Activated CD4-positive, alpha-beta T cell treated with anti-CD3 and anti-CD28 coated beads for 36 hours (primary cell): ENCODE measurements at regions of chr22 and their contacts with region 1.

Region 1: DNA sequence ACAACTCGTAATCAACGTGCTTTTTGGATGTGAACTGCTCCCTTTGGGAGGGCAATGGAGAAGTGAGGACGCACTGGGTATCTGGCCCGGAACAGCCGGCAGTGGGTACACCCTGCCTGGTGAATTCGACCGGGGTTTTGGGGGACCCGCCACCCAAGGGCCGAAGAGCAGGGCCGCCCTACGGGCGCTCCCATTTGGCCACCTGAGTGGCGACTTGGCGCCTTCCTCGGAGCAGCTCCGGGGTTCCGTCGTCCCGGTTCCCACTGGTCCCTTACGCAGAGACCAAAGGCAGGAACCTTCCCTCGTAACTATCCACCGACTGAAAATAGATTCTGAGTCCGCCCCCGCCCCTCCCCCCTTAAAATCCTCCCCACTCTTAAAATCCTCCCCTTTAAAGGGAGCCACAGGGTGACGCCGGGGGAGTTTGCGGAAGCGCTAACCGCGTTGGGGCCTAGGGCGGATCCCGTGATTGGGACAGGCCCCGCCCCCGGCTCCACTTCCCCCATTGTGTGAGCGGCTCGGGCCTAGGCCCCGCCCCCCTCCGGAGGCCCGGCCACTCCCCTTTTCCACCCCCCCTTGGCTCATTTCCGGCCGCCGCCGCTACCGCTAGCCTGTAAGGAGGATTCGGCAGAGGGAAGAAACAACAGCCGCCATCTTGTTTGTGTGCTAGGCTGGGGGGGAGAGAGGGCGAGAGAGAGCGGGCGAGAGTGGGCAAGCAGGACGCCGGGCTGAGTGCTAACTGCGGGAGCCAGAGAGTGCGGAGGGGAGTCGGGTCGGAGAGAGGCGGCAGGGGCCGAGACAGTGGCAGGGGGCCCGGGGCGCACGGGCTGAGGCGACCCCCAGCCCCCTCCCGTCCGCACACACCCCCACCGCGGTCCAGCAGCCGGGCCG is 1.0 kb upstream of the EP300 start:
- DNase-seq: peak; percentile 100
- ATAC-seq: peak; percentile 90
- H3K4me3 Mint-ChIP-seq: peak overlapping the region; percentile 97
- H3K27ac Mint-ChIP-seq: peak overlapping the region; percentile 99
- H3K4me1 Mint-ChIP-seq: peaks cover 25% of the 10 kb centered on the region
- H3K27me3 Mint-ChIP-seq: no peaks in the 10 kb centered on the region

Region 2: DNA sequence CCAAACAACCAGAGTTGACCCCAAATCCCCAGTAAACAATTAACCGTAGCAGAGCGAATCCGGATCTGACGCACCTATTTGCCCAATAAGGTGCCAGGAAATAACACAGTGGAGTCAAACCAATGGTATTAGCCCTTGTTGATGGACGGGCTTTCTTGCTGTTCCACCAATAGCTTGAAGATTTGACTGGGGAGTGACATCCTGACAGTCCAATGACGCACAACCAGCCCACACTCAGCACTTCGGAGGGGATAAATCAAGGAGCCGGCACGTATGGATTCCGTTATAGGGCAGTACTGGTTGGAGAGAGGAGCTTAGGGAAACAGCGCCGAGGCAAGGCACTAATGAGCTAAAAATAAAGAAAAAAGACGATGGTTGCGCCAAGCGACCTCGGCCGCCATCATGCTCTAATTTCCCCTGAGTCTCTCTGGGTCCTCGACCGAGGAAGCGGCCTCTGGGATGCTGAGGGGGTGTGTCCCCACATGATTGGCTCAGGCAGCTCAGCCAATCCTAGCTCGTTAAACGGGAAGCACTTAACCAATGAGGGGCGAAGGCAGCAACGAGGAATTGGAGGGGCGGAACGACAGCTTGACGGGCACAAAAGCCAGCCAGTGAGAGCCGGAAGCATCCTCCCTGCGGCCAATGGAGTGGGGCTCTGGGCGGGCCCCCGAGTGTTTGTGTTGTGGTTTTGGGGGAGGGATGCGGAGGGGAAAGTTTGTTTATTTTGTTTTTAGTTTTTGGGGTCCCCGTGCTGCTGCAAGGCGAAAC is 1047.1 kb before region 1 on chr22:
- CTCF ChIA-PET with region 1: no interaction called
- POLR2A ChIA-PET with region 1: no interaction called
- intact Hi-C with region 1: loop called in 1 of 2 experiments (anchors 5 kb)
- DNase-seq: peak; percentile 98
- ATAC-seq: peak; percentile 91
- H3K4me3 Mint-ChIP-seq: peak overlapping the region; percentile 87
- H3K27ac Mint-ChIP-seq: peak overlapping the region; percentile 99
- H3K4me1 Mint-ChIP-seq: peaks cover 24% of the 10 kb centered on the region
- H3K27me3 Mint-ChIP-seq: peaks cover 2% of the 10 kb centered on the region

Region 3: DNA sequence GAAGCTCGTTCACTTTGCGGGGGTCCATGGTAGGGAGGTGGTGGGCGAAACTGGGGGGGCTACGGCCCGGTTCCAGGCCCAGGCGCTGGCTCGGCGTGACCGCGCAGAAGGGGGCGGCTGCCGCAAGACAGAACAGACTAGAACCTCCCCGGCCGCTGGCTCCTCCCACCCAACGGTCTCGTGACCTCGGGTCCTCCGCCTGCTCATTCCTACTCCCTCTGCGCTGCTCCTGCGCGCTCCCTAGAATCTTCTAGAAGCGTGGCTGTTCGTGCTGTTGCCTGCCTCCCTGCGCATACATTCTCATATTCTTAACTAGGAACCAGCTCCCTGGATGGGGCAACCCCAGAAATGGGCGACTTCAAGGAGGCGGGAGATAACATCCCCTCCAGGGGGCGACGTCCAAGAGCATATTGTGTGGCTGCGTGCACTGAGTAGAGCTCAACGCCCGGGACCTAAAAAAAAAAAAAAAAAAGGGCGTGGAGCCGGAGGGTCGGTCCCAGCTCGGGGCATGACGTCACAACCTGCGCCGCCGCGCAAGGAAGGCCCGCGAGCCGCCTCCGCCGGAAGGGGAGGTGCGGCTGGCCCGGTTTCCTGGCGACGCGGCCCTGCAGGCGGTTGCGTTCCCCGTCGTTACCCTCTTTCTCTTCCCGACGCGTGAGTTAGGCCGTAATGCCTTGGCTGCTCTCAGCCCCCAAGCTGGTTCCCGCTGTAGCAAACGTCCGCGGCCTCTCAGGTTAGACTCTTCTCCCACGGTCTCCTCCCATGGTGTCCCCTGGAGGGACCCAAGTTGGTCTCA is 234.7 kb before region 1 on chr22 and contains the starts of genes ST13 and XPNPEP3:
- CTCF ChIA-PET with region 1: no interaction called
- POLR2A ChIA-PET with region 1: no interaction called
- intact Hi-C with region 1: loop called (anchors 1 to 5 kb)
- DNase-seq: peak; percentile 98
- ATAC-seq: peak; percentile 96
- H3K4me3 Mint-ChIP-seq: peak within 1 kb of the TSS; percentile 97
- H3K27ac Mint-ChIP-seq: peak within 1 kb of the TSS; percentile 99
- H3K4me1 Mint-ChIP-seq: peaks cover 53% of the 10 kb centered on the region
- H3K27me3 Mint-ChIP-seq: no peaks in the 10 kb centered on the region
- total RNA-seq, gene ST13: 260 to 297 TPM
- total RNA-seq, gene XPNPEP3: 21.5 to 25.8 TPM

Region 4: GRCh38 chr22:41106122-41106968 is 15.0 kb after region 1 on chr22:
- CTCF ChIA-PET with region 1: interaction called, 5 read pairs
- POLR2A ChIA-PET with region 1: interaction called, 6 read pairs
- intact Hi-C with region 1: loop called in 1 of 2 experiments (anchors 1 kb)
- DNase-seq: peak; percentile 17
- ATAC-seq: peak; percentile 63
- H3K4me3 Mint-ChIP-seq: peak overlapping the region; percentile 1
- H3K27ac Mint-ChIP-seq: peak overlapping the region; percentile 84
- H3K4me1 Mint-ChIP-seq: peaks cover 59% of the 10 kb centered on the region
- H3K27me3 Mint-ChIP-seq: no peaks in the 10 kb centered on the region

Region 5: DNA sequence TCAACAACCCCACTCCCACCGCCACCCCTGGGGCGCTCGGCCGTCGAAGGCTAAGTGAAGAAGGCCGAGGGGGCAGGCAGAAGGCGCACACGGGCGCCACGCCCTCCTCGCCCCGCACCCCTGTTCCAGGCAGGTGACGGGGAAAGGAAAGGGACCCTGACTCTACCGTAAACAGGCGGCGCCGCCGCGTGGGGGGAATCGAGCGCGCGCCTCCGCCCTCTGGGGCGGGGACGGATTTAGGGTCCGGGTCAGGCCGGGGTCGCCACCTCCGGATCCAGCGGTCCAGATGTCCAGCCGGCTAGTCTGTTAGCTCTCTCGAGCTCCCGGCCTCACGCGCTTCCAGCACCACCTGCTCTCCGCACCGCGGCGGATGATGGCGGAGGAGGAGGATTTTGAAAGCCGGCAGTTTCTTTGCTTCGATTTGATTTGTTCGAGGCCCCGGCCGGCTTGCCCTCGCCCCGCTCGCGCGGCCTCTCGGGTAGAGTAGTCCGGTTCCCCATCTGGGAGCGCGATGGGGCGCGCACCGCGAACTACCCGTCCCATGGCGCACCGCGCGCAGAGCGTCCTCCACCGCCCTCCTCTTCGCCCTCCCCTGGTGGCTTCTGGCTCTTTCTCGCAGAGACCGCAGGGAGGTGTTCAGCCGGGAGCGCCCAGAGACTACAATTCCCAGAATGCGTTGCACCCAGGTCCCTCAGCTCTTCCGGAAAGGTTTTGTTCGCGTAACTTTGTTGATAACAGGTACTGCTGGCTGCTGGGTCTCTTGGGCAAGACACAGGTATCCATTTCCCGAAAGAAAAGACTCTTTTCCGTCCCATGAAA is 194.7 kb after region 1 on chr22 and contains the start of gene RANGAP1:
- CTCF ChIA-PET with region 1: interaction called, 3 read pairs
- POLR2A ChIA-PET with region 1: interaction called, 3 read pairs
- intact Hi-C with region 1: loop called (anchors 1 kb)
- DNase-seq: peak; percentile 99
- ATAC-seq: peak; percentile 94
- H3K4me3 Mint-ChIP-seq: peak within 1 kb of the TSS; percentile 88
- H3K27ac Mint-ChIP-seq: peak within 1 kb of the TSS; percentile 97
- H3K4me1 Mint-ChIP-seq: peaks cover 33% of the 10 kb centered on the region
- H3K27me3 Mint-ChIP-seq: no peaks in the 10 kb centered on the region
- total RNA-seq, gene RANGAP1: 140 to 157 TPM

Region 6: DNA sequence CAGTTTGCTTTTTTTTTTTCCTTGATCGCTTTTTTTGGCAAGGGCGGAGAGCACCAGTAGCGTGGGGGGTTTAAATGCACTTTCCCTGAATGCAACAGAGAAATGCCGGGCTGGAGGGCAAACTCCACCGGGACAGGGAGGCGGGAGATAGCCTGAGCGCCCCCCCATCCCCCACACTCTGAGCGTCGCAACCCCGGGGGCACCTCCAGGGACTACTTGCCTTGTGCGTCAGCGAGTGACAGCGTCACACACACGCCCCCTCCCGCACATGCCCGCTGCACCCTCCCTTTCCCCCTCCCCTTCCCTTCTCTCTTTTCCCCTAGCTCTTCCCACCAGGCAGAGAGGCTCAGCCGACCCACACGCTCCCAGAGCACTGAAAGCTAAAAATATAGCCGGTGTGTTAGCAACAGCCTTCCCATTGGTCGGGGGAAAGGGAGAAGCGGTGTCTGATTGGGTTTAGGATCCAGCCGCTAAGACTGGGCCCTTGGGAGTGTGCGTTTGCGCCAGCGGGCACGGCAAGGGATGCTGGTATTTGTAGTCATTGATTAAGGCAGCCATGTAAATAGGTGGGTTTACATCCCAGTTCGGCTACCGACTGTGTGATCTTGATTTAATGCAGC is 356.9 kb after region 1 on chr22:
- CTCF ChIA-PET with region 1: no interaction called
- POLR2A ChIA-PET with region 1: interaction called, 3 read pairs
- intact Hi-C with region 1: loop called in 1 of 2 experiments (anchors 2 kb)
- DNase-seq: peak; percentile 95
- ATAC-seq: peak; percentile 73
- H3K4me3 Mint-ChIP-seq: peak overlapping the region; percentile 86
- H3K27ac Mint-ChIP-seq: peak overlapping the region; percentile 97
- H3K4me1 Mint-ChIP-seq: peaks cover 8% of the 10 kb centered on the region
- H3K27me3 Mint-ChIP-seq: no peaks in the 10 kb centered on the region

Region 7: GRCh38 chr22:41589391-41590241 is 498.2 kb after region 1 on chr22 and contains the start of gene PMM1:
- CTCF ChIA-PET with region 1: no interaction called
- POLR2A ChIA-PET with region 1: interaction called, 3 read pairs
- intact Hi-C with region 1: loop called in 1 of 2 experiments (anchors 1 kb)
- DNase-seq: peak; percentile 100
- ATAC-seq: peak; percentile 99
- H3K4me3 Mint-ChIP-seq: peak within 1 kb of the TSS; percentile 88
- H3K27ac Mint-ChIP-seq: peak within 1 kb of the TSS; percentile 85
- H3K4me1 Mint-ChIP-seq: peaks cover 15% of the 10 kb centered on the region
- H3K27me3 Mint-ChIP-seq: no peaks in the 10 kb centered on the region
- total RNA-seq, gene PMM1: 30.4 to 37.4 TPM